ENCODE measurements at regions of chr17 and their contacts with region 1.

Region 1: DNA sequence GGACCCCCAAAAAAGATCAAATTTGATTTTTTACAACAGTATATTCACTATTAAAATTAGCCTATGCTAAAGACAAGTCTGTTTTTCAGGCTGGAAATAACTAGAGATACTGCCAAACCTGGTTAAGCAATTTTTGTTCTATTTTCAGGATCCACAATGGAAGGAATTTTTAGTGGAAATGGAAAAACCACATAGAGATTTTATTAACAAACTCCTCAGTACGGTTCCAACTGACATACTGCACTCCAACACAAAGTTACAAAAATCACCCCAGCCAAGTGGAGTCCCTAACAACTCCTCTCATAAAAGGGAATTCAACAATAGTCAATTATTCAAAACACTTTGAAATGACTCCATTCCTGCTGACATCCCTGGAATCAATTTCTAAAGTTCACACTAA is 101.6 kb upstream of the TOB1 start:
- DNase-seq: no peak

Region 2: DNA sequence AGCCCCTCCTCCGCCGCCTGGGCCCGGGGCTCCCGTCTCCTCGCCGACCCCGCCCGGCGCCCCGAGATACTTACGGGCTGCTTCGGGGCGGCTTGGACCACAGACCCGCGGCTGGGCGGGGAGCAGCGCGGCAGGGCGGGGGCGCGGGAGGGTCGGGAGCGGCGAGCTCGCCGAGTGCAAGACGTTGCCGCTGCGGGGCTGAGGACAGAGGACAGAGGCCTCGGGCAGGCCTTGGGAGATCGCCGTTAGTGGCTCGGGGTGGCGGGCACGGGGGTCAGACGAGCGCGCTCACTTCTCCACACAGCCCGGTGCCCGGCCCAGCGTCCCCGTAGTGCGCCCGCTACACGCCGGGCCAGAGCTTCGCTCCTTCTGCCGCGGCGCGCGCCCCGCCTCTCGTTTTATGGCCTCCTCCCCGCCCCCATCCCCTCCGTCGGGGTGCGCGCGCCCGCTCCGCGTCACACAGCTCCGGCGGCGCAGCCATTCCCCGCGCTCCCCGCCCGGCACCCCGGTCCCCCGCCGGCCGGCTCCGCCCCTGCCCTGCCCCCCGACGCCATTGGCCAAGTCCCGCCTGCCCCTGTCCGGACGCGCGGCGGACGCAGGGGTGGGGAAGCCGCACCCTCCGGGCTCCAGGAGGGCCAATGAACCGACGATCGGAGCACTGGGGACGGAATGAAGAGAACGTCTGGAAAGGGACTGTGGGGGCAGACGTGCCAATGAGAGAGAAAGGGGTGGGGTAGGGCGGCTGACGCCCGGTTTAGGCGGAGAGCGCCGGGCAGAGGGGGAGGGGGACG is 101.6 kb before region 1 on chr17 and contains the start of gene TOB1:
- in situ Hi-C with region 1: loop called (anchors 10 kb)
- DNase-seq: peak; percentile 98
- total RNA-seq, gene TOB1: 11.8 and 15.6 TPM in 2 replicates

Region 3: DNA sequence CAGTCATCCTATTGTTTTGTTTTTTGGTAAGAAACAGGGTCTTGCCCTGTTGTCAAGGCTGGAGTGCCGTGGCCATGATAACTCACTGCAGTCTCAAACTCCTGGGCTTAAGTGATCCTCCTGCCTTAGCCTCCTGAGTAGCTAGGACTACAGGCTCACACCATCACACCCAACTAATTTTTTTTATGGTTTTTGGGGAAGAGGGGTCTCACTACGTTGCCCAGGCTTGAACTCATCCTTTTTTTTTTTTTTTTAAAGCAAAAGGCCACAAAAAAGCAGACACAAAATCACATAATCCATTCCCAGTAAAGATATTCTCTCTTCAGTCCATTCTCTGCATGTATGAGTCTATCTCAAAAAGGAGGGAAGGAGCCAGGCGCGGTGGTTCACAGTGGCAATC is 147.4 kb after region 1 on chr17:
- in situ Hi-C with region 1: no loop called
- DNase-seq: no peak